GM23248 (cell line): ENCODE measurements at regions of chr15 and their contacts with region 1.

Region 1: GRCh38 chr15:61834076-61834697 is 226.1 kb downstream of the VPS13C start:
- DNase-seq: peak; percentile 82
- H3K4me3 ChIP-seq: no peak overlapping the region
- H3K27ac ChIP-seq: no peak overlapping the region
- H3K4me1 ChIP-seq: no peaks in the 10 kb centered on the region
- H3K27me3 ChIP-seq: no peaks in the 10 kb centered on the region

Region 2: GRCh38 chr15:61051569-61052031 is 782.6 kb before region 1 on chr15:
- in situ Hi-C with region 1: loop called (anchors 25 kb)
- DNase-seq: peak; percentile 85
- H3K4me3 ChIP-seq: no peak overlapping the region
- H3K27ac ChIP-seq: no peak overlapping the region
- H3K4me1 ChIP-seq: peaks cover 10% of the 10 kb centered on the region; the same call in 1 of the 2 replicates
- H3K27me3 ChIP-seq: no peaks in the 10 kb centered on the region

Region 3: DNA sequence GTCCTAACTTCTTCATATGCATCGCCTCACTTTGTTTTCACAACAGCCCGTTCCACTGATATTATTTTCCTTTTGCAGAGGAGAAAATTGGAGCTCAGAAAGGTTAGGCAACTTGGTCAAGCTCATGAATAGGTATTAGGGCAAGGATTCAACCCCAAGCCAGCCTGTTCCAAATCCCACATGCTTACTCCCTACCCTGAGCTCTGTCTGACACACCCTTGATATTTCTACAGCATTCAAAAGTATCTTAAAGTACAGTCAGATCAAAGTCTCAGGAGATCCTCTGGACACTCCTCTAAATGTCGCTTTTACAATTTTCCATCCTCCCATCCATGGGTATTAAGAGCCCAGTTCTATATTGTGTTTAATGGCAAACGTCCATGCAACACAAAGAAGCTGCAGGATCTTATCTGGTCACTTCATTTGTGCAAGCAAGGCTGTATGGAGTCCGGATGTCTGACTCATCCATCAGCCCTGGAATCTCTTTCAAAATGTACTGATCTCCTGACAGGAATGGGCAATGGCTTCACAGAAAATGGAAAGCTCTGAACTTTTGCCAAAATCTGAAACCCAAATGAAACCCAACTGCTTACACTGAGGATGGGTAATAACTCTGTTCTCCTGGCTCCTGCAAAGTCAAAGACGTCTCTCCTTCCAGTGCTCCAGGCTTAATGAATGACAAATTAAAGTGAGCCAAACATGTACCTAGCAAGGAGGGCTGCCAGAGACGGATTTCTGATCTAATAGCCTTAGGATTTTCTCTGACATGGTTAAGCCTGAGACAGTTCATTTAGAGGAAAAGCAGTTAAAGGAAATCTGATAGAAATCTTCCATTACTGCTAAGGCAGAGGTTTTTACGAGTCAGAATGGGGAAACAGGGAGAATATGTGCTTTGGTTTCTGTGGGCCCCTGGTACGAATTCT is 374.1 kb before region 1 on chr15:
- in situ Hi-C with region 1: no loop called
- DNase-seq: peak; percentile 26
- H3K4me3 ChIP-seq: no peak overlapping the region
- H3K27ac ChIP-seq: no peak overlapping the region
- H3K4me1 ChIP-seq: no peaks in the 10 kb centered on the region
- H3K27me3 ChIP-seq: peaks cover 5% of the 10 kb centered on the region; the same call in 1 of the 2 replicates

Region 4: DNA sequence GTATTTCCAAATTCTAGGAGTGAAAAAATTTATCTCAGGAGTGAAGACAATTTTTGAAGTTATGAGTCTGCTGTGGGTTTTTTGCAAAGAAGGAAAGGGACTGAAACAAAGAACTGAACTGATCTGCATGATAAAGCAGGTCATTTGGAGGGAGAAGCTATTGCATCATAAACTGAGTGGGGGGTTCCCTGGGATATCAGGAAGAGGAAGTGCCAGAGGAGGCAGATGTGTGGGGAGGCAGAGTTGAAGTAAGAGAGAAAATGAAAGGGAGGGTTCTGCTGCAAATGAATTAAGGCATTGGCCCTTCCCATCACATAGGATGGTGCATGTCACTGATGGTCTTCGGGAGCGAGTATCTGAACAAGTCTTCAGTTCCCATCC is 153.2 kb before region 1 on chr15:
- in situ Hi-C with region 1: no loop called
- DNase-seq: no peak
- H3K4me3 ChIP-seq: no peak overlapping the region
- H3K27ac ChIP-seq: no peak overlapping the region
- H3K4me1 ChIP-seq: no peaks in the 10 kb centered on the region
- H3K27me3 ChIP-seq: 0 out of 2 replicates have a peak, but pooled peaks cover 8% of the 10 kb centered on the region

Region 5: DNA sequence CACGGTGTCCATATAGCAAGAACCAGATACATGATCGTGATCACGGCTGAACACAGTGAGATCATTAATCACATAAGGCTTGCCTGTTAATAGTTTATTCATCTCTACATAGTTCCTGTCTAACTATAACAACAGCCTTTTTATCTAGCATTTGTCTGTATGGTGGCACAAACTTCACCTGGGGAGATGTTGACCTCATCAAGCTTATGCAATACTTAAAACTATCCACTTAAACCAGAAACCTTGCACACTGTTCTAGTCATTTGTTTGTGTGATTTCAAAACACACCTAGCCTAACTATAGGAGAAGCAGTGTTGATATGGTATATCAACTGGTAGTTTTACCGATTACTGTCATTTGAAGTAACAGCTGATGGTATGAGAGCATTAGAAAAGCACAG is 101.3 kb after region 1 on chr15:
- in situ Hi-C with region 1: no loop called
- DNase-seq: no peak
- H3K4me3 ChIP-seq: no peak overlapping the region
- H3K27ac ChIP-seq: no peak overlapping the region
- H3K4me1 ChIP-seq: no peaks in the 10 kb centered on the region
- H3K27me3 ChIP-seq: no peaks in the 10 kb centered on the region